CD8-positive, alpha-beta memory T cell (primary cell): ENCODE measurements at regions of chr3 and their contacts with region 1.

Region 1: DNA sequence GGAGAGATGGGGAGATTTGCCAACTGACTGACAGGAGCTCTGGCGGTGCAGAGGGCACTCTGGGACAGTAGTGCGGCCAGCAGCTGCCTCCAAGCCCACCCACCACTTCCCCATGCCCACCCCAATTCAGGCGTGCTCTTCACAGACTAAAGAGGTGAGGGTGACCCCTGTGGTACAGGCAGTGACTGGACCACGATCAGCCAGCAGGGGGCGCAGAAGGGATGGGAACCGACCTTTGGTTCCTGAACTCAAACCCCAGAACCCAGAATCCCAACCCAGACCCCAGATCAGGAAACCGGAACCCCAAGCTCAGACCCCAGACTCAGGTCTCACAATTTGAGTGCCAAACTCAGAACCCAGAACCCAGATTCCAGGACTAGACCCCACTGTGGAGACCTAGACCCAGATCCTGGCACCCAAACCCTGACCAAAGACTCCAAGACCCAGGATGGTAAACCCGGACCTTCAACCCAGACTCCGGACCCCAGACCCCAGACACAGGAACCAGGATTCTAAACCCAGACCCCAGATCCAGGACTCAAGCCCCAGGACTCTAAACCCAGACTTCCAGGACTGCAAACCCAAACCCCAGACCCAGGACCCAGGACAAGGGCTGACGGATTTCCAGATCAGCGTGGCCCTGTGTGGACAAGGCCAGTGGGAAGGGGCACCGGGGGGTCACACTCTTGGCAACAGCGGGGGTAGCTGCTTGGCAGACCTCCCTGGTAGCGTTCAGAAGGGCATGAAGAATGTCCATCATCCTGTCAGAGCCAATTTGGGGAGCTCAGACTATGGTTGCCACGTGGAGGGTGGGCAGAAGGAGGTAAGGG is 3.7 kb upstream of the MYL3 start:
- DNase-seq: peak; percentile 60 to 85 (median 73)
- H3K4me3 ChIP-seq: no peak overlapping the region
- H3K4me3 Mint-ChIP-seq: no peak overlapping the region
- H3K27ac ChIP-seq: no peak overlapping the region
- H3K27ac Mint-ChIP-seq: peak overlapping the region in 3 of 8 donors; percentile 28 to 91 (median 49)
- H3K4me1 ChIP-seq: no peaks in the 10 kb centered on the region
- H3K4me1 Mint-ChIP-seq: peaks cover 0 to 2% (median 0%) of the 10 kb centered on the region in 3 donors
- H3K27me3 ChIP-seq: no peaks in the 10 kb centered on the region
- H3K27me3 Mint-ChIP-seq: peaks cover 2 to 22% of the 10 kb centered on the region in 2 donors

Region 2: DNA sequence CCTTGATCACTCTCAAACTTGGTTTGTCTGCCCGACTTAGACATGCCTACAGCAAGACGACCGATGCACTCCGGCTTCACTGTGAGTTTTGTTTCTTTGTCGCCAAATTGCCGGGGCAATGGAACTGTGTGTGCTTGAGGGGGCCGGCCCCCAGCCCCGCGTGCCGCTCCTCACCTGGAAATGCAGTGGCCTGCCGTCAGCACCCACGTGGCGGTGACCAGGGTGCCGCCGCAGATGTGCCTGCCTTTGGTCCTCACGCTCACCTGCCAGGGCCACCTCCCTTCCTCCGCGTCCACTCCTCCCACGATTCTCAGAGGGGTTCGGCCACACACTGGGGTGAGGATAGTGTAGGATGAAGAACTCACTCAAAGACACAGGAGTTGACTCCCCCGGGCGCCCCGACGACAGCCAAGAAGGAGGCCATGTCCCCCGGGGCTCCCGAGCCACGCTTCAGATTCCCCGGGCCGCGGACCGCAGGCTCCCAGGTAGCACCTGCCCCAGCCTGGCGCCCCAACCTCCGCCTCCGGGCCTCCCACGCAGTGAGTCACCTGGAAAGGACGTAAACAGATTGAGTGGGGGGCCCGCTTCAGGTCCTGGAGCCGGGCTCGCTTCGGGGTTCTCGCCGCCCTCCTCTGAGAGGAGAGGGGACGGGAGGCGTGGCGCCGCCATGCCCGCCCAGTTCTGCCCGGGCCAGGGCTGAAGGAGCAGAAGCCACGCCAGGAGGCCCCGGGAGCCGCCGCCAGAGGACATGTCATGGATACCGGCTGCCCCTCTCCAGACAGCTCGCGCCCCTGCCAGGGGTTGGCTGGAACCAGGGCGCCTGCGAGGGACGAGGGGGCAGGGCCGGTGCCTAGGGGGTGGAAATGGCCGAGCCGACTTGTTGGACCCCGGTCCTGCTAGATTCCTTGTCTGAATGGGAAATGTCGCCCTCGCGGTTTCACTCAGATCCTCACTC is 33.3 kb before region 1 on chr3:
- CTCF ChIA-PET with region 1: no interaction called
- POLR2A ChIA-PET with region 1: no interaction called
- DNase-seq: no peak
- H3K4me3 ChIP-seq: no peak overlapping the region
- H3K4me3 Mint-ChIP-seq: no peak overlapping the region
- H3K27ac ChIP-seq: no peak overlapping the region
- H3K27ac Mint-ChIP-seq: peak overlapping the region in 1 of 8 donors; percentile 32
- H3K4me1 ChIP-seq: no peaks in the 10 kb centered on the region
- H3K4me1 Mint-ChIP-seq: peaks cover 1 to 8% (median 5%) of the 10 kb centered on the region in 3 donors
- H3K27me3 ChIP-seq: no peaks in the 10 kb centered on the region
- H3K27me3 Mint-ChIP-seq: peaks cover 0 to 3% of the 10 kb centered on the region in 2 donors

Region 3: DNA sequence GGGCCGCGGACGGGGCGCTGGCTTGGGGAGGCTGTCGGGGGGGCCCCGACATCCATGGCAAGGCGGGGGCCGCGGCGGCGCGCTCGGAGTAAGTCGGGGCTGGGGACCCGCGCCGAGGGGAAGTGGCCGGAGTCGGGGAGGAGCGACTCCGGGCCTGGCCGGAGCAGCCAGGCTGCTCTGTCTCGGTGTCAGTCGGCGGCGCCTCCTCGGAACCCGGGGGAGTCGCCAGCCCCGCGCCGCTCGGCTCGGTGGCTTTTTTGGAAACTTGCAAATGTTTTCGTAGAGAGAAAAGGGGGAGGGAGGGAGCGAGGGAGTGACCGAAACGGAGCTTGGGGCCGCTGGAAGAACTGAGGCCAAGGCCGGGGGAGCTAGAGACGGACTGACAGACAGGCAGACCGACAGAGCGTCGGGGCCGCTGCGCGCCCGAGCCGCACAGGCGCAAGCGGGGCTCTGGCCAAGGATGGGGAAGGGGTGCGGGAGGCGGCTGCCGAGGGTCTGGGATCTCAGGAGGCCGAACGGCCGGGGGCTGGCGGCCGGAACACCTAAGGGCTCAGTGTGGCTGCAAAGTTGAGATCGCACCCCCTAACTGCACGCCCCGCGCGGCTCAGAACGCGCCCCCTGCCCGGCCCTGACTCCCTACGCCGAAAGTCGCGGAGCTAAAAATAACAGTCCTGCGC is 15.6 kb after region 1 on chr3:
- CTCF ChIA-PET with region 1: interaction called, 10 read pairs
- POLR2A ChIA-PET with region 1: no interaction called
- DNase-seq: no peak
- H3K4me3 ChIP-seq: peak overlapping the region; percentile 34
- H3K4me3 Mint-ChIP-seq: peak overlapping the region; percentile 48 to 82 (median 75)
- H3K27ac ChIP-seq: no peak overlapping the region
- H3K27ac Mint-ChIP-seq: peak overlapping the region in 1 of 8 donors; percentile 33
- H3K4me1 ChIP-seq: no peaks in the 10 kb centered on the region
- H3K4me1 Mint-ChIP-seq: peaks cover 0 to 20% (median 4%) of the 10 kb centered on the region in 3 donors
- H3K27me3 ChIP-seq: peaks cover 35% of the 10 kb centered on the region
- H3K27me3 Mint-ChIP-seq: peaks cover 35 to 47% of the 10 kb centered on the region in 2 donors

Region 4: GRCh38 chr3:46895204-46895660 is 28.3 kb after region 1 on chr3:
- CTCF ChIA-PET with region 1: interaction called, 18 read pairs
- POLR2A ChIA-PET with region 1: no interaction called
- DNase-seq: peak; percentile 59 to 83 (median 71)
- H3K4me3 ChIP-seq: no peak overlapping the region
- H3K4me3 Mint-ChIP-seq: peak overlapping the region in 1 of 7 donors; percentile 53
- H3K27ac ChIP-seq: no peak overlapping the region
- H3K27ac Mint-ChIP-seq: peak overlapping the region in 1 of 8 donors; percentile 48
- H3K4me1 ChIP-seq: no peaks in the 10 kb centered on the region
- H3K4me1 Mint-ChIP-seq: peaks cover 10 to 32% (median 14%) of the 10 kb centered on the region in 3 donors
- H3K27me3 ChIP-seq: peaks cover 20% of the 10 kb centered on the region
- H3K27me3 Mint-ChIP-seq: peaks cover 39 to 59% of the 10 kb centered on the region in 2 donors

Region 5: DNA sequence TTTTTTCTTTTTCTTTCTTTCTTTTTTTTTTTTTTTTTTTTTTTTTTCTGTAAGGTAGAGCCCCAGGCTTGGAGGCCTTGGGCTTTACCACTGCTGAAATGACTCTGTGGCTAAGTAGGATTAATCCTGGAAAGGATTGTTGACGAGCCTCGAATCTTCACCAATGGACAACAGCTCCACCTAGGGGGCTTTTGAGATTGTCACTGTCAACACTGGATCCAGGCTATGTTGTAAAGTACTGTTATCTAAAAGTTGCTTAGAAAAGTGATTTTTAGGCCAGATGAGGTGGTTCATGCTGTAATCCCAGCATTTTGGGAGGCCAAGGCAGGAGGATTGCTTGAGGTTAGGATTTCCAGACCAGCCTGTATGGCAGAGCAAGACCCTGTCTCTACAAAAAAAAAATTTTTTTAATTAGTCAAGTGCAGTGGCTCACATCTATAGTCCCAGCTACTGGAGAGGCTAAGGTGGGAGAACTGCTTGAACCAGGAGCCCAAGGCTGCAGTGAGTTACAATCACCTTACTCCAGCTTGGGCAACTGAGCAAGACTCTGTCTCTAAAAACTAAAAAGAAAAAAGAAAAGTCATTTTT is 457.4 kb after region 1 on chr3:
- CTCF ChIA-PET with region 1: interaction called, 16 read pairs
- POLR2A ChIA-PET with region 1: no interaction called
- DNase-seq: peak; percentile 6 to 58 (median 23)
- H3K4me3 ChIP-seq: no peak overlapping the region
- H3K4me3 Mint-ChIP-seq: no peak overlapping the region
- H3K27ac ChIP-seq: no peak overlapping the region
- H3K27ac Mint-ChIP-seq: peak overlapping the region in 2 of 8 donors; percentile 3 to 24
- H3K4me1 ChIP-seq: no peaks in the 10 kb centered on the region
- H3K4me1 Mint-ChIP-seq: peaks cover 0 to 4% (median 0%) of the 10 kb centered on the region in 3 donors
- H3K27me3 ChIP-seq: no peaks in the 10 kb centered on the region
- H3K27me3 Mint-ChIP-seq: no peaks in the 10 kb centered on the region